IMR-90 (cell line): ENCODE measurements at regions of chr3 and their contacts with region 1.

Region 1: GRCh38 chr3:171526869-171527268 is 66.7 kb upstream of the TNIK start:
- DNase-seq: peak; percentile 87
- ATAC-seq: peak; percentile 80
- H3K4me3 ChIP-seq: no peak overlapping the region
- H3K27ac ChIP-seq: peak overlapping the region; percentile 84; the same call in 1 of the 2 replicates
- H3K4me1 ChIP-seq: peaks cover 23% of the 10 kb centered on the region
- H3K27me3 ChIP-seq: no peaks in the 10 kb centered on the region
- CTCF ChIP-seq: no peak
- POLR2A ChIP-seq: no peak
- RAD21 ChIP-seq: peak; percentile 15; the same call in 1 of the 2 replicates

Region 2: GRCh38 chr3:171480526-171480925 is 46.3 kb before region 1 on chr3:
- CTCF ChIA-PET with region 1: no interaction called
- POLR2A ChIA-PET with region 1: no interaction called
- dilution Hi-C with region 1: no loop called
- in situ Hi-C with region 1: no loop called
- intact Hi-C with region 1: no loop called
- DNase-seq: no peak
- ATAC-seq: no peak
- H3K4me3 ChIP-seq: no peak overlapping the region
- H3K27ac ChIP-seq: no peak overlapping the region
- H3K4me1 ChIP-seq: no peaks in the 10 kb centered on the region
- H3K27me3 ChIP-seq: no peaks in the 10 kb centered on the region; the same call in 1 of the 2 replicates
- CTCF ChIP-seq: no peak
- POLR2A ChIP-seq: no peak
- RAD21 ChIP-seq: no peak

Region 3: DNA sequence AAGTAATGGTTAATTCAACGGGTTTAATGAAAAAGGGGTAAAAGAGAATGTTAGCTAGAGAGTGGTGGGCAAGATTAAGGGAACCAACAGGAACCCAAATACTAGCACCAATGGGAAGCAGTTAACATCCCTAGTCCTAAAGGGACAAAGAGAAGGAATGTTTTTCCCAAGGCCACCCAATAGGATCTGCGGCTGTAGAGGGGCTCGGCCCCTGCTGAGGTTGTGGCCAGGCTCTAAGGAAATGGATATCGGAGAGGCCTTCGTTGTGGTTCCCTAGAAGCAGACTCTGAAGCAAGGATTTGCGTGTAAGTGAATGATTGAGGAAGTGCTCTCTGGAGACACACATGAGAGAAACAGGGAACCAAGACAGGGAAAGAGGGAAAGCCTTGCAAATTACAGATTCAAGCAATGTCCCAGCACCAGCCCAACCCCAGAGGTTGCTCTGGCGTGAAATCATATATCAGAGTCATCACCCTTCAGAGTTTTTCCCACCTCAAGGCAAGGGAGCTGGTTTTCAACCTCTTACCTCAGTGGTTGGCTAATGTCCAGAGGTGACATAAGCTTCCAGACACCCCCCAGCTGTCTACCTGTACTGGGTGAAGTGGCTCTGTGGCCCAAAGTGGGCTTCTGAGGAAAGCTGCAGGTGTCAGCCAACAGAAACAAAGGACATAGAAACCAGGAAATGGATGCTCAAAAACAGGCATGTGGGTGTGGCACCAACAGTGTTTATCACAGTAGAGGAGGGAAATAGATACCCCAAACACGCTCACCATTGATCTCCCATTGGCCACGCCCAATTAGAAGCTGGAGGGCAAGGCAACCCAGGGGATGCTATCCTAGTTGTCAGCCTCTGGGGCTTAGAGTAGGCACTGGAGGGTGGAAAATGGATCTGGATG is 17.1 kb after region 1 on chr3:
- CTCF ChIA-PET with region 1: no interaction called
- POLR2A ChIA-PET with region 1: interaction called, 10 read pairs
- dilution Hi-C with region 1: no loop called
- in situ Hi-C with region 1: no loop called
- intact Hi-C with region 1: no loop called
- DNase-seq: no peak
- ATAC-seq: no peak
- H3K4me3 ChIP-seq: no peak overlapping the region
- H3K27ac ChIP-seq: no peak overlapping the region
- H3K4me1 ChIP-seq: no peaks in the 10 kb centered on the region; the same call in 1 of the 2 replicates
- H3K27me3 ChIP-seq: no peaks in the 10 kb centered on the region
- CTCF ChIP-seq: no peak
- POLR2A ChIP-seq: no peak
- RAD21 ChIP-seq: no peak